ENCODE measurements at regions of chr11 and their contacts with region 1.

Region 1: DNA sequence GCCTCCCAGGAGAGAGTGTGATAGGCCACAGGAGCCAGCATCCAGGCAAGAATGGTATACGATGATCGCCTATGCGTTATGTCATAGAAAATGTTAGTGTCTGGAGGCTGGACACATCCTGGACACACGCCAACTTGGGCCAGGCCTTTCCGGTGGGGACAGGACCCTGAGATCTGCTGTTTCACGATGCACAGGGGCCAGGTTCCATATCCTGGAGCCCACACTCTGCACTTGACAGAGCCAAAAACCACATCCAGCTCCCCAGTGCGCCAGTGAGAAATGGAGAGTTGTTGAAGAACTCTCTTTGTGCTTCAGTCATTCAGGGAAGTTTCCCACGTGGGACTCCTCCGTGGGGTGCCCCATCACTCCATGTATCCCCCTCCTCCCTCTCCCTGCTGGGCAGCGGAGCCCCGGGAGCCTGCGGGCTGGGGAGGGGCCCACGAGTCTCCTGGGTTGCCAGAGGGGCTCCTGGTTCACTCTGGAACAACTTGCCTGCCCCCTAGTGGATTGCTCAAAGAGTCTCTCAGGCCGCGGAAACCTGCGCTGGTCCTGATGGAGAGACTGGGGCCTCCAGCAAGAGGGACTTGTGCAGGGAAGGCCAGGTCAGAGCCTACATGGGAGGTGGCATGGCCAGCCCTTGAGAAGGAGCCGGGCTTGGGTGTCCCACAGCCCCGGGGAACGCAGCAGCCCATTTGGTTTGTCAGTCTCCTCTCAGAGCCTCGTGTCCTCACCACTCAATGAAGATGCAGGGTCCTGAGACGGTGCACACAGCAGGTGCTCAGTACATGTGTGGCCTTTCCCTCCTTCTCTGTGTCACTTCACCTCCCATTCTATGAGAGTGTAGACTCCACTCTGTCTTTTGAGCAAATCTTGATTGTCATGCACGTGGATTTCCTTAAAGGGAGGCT is 10.2 kb upstream of the LRRC32 start:
- DNase-seq: peak; percentile 54 to 68
- H3K4me3 ChIP-seq: no peak overlapping the region
- H3K27ac ChIP-seq: no peak overlapping the region
- H3K4me1 ChIP-seq: no peaks in the 10 kb centered on the region; the same call in 1 of the 2 replicates
- H3K27me3 ChIP-seq: no peaks in the 10 kb centered on the region
- CTCF ChIP-seq: peak; percentile 95

Region 2: DNA sequence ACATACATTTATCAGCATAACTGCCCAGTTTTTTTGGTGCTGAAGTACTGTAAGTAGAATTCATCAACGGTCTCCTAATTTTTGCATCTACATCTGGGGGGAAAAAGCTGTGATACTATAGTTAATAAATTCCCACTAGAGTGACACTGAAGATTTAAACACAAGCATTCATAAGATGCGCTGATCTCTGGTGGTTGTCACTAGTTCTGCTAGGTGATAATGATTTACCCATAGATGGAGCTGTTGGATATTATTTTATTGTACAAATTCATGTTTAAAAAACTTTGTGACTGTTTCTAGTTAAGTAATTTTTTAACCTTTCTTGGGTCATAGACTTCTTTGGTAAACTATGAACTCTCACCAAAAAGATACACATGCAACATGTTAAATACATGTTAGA is 129.4 kb before region 1 on chr11:
- CTCF ChIA-PET with region 1: no interaction called
- POLR2A ChIA-PET with region 1: no interaction called
- intact Hi-C with region 1: loop called (anchors 1 kb)
- DNase-seq: no peak
- H3K4me3 ChIP-seq: no peak overlapping the region
- H3K27ac ChIP-seq: no peak overlapping the region
- H3K4me1 ChIP-seq: no peaks in the 10 kb centered on the region
- H3K27me3 ChIP-seq: no peaks in the 10 kb centered on the region
- CTCF ChIP-seq: peak; percentile 56; the same call in 1 of the 2 replicates

Region 3: GRCh38 chr11:76838678-76839068 is 157.9 kb after region 1 on chr11:
- CTCF ChIA-PET with region 1: no interaction called
- POLR2A ChIA-PET with region 1: no interaction called
- intact Hi-C with region 1: no loop called
- DNase-seq: no peak
- H3K4me3 ChIP-seq: no peak overlapping the region
- H3K27ac ChIP-seq: no peak overlapping the region
- H3K4me1 ChIP-seq: peaks cover 44% of the 10 kb centered on the region
- H3K27me3 ChIP-seq: no peaks in the 10 kb centered on the region
- CTCF ChIP-seq: no peak

Region 4: DNA sequence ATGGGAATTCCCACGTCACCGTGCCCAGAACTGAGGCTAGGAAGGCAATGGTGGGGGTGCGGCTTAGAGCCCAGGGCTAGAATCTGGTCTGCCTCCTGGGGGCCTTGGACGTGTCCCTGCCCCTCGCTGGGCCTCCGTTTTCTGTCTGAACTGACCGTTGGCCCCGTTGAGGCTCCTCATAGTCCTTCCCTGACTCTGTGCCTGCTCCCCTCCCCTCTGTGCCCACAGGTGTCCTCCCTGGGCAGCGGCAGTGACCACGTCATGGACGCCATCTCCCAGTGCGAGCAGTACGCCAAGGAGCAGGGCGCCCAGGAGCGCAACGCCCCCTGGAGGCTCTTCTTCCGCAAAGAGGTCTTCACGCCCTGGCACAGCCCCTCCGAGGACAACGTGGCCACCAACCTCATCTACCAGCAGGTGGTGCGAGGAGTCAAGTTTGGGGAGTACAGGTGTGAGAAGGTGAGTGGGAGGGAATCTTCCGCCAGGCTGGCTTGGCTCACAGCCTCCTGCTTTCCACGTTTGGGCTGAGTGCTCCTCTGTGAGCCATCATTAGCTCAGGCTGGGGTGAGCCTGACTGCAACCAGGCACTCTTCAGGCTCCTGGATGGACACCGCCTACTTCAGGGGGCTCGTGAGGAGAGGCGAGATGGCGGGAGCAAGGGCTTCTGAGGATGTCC is 511.2 kb after region 1 on chr11:
- CTCF ChIA-PET with region 1: no interaction called
- POLR2A ChIA-PET with region 1: no interaction called
- intact Hi-C with region 1: no loop called
- DNase-seq: peak; percentile 94 to 98
- H3K4me3 ChIP-seq: peak overlapping the region; percentile 60
- H3K27ac ChIP-seq: no peak overlapping the region
- H3K4me1 ChIP-seq: peaks cover 8% of the 10 kb centered on the region
- H3K27me3 ChIP-seq: no peaks in the 10 kb centered on the region
- CTCF ChIP-seq: peak; percentile 100

Measured in PC-9 (cell line).